ENCODE measurements at regions of chr5 and their contacts with region 1.

Region 1: GRCh38 chr5:95672486-95673469 is 10.0 kb downstream of the SPATA9 start:
- DNase-seq: no peak
- ATAC-seq: peak; percentile 19

Region 2: GRCh38 chr5:95565280-95565920 is 107.4 kb before region 1 on chr5:
- intact Hi-C with region 1: loop called (anchors 5 kb)
- DNase-seq: no peak
- ATAC-seq: no peak

Region 3: DNA sequence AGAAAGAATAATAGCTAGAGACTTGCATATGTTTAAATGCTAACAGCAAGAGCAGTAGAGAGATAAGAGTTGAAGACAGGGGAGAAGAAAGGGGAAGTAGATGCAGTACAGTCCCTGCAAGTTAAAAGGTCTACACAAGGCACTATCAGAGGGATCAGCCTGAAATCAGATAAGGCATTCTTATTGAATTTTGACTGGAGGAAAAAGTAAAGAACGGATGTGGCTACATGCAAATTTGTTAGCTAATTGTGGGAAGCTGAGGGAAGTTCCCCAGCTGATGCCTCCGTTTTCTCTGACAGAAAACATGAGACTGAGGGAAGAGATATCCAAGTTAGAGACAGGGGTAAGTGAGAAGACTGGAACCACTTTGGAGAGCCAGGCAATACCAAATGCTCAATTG is 45.4 kb after region 1 on chr5:
- intact Hi-C with region 1: no loop called
- DNase-seq: no peak
- ATAC-seq: no peak

Region 4: DNA sequence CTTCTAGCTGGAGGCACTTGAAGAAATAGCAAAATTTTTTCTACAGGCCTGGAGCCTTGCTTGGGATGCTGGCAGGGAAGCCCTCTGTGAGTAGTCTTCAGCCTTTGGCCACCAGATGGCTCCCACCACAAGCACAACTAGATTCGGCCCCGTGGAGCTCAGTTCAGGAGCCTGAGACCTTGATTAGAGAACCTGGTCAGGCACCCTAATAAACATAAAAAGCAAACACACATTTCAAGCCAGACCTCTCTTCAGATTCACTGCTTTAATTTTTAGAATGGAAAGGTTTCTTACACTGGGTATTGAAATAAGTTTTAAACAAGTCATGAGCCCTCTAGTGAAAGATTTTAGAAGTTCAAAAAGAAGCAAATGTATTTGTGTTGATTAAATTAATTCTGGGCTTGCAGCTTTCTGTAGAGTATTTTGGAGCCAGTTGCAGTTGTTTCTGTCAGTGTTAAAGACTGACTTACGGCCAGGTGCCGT is 108.4 kb after region 1 on chr5:
- intact Hi-C with region 1: loop called (anchors 10 kb)
- DNase-seq: peak; percentile 86
- ATAC-seq: peak; percentile 96